Aorta (tissue), 5 donors: ENCODE measurements at regions of chr14 and their contacts with region 1.

Region 1: DNA sequence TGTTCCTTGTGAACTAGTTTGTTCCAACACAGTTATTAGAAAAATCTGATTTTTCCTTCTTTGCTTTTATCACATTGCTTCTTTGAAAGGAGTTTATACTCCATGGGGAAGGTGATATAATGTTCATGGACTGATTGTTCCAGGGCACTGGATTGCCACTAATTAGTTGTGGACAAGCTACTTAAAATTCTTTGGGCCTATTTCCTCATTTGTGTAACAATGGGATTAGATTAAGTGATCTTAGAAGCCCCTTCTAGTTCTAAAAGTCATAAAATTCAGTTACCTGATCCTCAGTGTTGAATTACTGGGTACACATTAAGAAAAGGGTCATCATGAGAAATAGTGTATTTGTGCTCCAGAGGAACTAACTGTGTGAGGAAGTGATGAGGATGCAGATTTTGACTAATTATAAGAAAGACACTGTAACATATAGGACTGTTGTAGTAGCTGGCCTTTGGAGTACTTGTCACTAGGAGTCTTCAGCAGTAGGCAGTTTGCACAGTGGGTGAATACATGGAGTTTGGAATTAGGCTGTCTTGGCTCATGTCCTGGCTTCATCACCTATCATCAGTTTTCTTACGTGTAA is 82.2 kb downstream of the MIA2 start:
- DNase-seq: no peak
- ATAC-seq: no peak
- H3K4me3 ChIP-seq: no peak overlapping the region
- H3K27ac ChIP-seq: no peak overlapping the region
- H3K4me1 ChIP-seq: no peaks in the 10 kb centered on the region
- H3K27me3 ChIP-seq: no peaks in the 10 kb centered on the region

Region 2: DNA sequence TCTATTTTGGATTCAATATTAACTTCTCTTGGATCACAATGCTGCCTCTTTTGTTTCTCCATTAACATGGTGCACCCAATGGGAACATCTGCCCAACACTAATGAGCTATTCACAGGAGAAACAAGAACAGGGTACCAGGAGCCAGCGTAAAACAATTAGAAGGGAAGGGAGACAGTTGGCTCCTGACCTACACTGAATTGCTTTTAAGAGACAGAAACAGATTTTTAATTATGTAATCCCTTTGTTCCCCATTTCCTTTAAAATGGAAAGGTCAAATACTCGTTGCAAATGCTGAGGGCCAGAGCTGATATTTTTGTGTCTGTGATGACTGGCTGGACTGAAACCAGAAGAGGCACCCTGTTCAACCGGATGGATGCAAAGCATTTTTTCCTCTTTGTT is 321.2 kb before region 1 on chr14:
- intact Hi-C with region 1: no loop called
- DNase-seq: no peak
- ATAC-seq: no peak
- H3K4me3 ChIP-seq: no peak overlapping the region
- H3K27ac ChIP-seq: no peak overlapping the region
- H3K4me1 ChIP-seq: no peaks in the 10 kb centered on the region
- H3K27me3 ChIP-seq: no peaks in the 10 kb centered on the region

Region 3: GRCh38 chr14:39368261-39368959 is 52.5 kb after region 1 on chr14:
- intact Hi-C with region 1: loop called in 1 of 2 experiments (anchors 10 kb)
- DNase-seq: peak in 1 of 2 donors; percentile 54
- ATAC-seq: peak; percentile 60
- H3K4me3 ChIP-seq: no peak overlapping the region
- H3K27ac ChIP-seq: no peak overlapping the region
- H3K4me1 ChIP-seq: peaks cover 0 to 1% of the 10 kb centered on the region in 2 donors
- H3K27me3 ChIP-seq: no peaks in the 10 kb centered on the region